Psoas muscle (tissue), 8 donors: ENCODE measurements at regions of chr17 and their contacts with region 1.

Region 1: DNA sequence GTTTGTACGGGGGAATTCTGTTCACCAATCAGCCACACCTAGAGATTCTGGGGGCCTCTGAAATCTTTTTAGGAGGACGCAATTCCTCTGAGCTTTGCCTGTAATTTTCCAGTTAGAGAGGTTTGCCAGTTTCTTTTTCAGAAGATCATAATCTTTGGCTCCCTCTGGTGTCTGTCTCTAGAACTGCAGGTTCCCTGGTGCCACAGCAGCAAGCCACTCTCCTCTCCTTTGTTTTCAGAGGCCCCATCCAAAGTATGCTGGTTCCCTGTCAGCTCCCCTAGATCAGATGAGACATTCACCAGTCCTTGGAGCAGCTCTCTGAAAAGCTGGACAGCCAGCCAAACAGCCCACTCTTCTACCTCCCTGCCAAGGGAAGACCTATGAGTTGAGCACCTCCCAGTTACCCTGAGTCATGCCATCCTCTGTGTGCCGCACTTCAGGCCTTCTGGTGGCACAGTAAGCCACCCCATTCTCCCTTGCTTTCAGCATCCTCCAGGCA is 36.1 kb downstream of the RNF112 start:
- DNase-seq: peak in 1 of 2 donors; percentile 31
- ATAC-seq: peak; percentile 70 to 91 (median 78)
- H3K4me3 ChIP-seq: no peak overlapping the region
- H3K27ac ChIP-seq: peak overlapping the region; percentile 55
- H3K4me1 ChIP-seq: peaks cover 5% of the 10 kb centered on the region
- H3K27me3 ChIP-seq: no peaks in the 10 kb centered on the region
- CTCF ChIP-seq: peak; percentile 98

Region 2: GRCh38 chr17:19362277-19363113 is 84.6 kb before region 1 on chr17 and contains the start of gene B9D1:
- intact Hi-C with region 1: loop called (anchors 2 kb)
- DNase-seq: peak; percentile 91 to 97
- ATAC-seq: peak; percentile 96 to 98 (median 96)
- H3K4me3 ChIP-seq: peak within 1 kb of the TSS; percentile 90
- H3K27ac ChIP-seq: peak within 1 kb of the TSS; percentile 76
- H3K4me1 ChIP-seq: no peaks in the 10 kb centered on the region
- H3K27me3 ChIP-seq: no peaks in the 10 kb centered on the region
- CTCF ChIP-seq: peak; percentile 97
- total RNA-seq, gene B9D1: 4.7 to 8.7 (median 6.4) TPM

Region 3: GRCh38 chr17:19457830-19458271 is 10.7 kb after region 1 on chr17:
- intact Hi-C with region 1: loop called in 1 of 2 experiments (anchors 2 kb)
- DNase-seq: no peak
- ATAC-seq: no peak
- H3K4me3 ChIP-seq: no peak overlapping the region
- H3K27ac ChIP-seq: no peak overlapping the region
- H3K4me1 ChIP-seq: no peaks in the 10 kb centered on the region
- H3K27me3 ChIP-seq: no peaks in the 10 kb centered on the region
- CTCF ChIP-seq: no peak

Region 4: DNA sequence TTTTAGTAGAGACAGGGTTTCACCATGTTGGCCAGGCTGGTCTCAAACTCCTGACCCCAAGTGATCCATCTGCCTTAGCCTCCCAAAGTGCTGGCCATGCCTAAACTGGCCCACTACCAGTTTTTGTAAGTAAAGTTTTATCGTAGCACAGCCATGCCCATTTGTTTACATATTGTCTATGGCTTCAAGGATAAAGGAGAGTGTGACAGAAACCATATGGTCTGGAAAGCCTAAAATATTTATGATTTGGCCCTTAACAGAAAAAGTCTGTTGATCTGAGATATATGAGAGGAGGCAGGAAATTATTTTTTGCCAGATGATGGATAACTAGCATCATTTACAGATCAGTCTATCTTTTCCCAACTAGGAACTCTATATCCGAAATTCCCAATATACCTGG is 526.0 kb after region 1 on chr17:
- intact Hi-C with region 1: no loop called
- DNase-seq: no peak
- ATAC-seq: no peak
- H3K4me3 ChIP-seq: no peak overlapping the region
- H3K27ac ChIP-seq: no peak overlapping the region
- H3K4me1 ChIP-seq: peaks cover 16% of the 10 kb centered on the region
- H3K27me3 ChIP-seq: no peaks in the 10 kb centered on the region
- CTCF ChIP-seq: no peak